Activated CD4-positive, alpha-beta T cell treated with anti-CD3 and anti-CD28 coated beads for 36 hours (primary cell): ENCODE measurements at regions of chr7 and their contacts with region 1.

Region 1: DNA sequence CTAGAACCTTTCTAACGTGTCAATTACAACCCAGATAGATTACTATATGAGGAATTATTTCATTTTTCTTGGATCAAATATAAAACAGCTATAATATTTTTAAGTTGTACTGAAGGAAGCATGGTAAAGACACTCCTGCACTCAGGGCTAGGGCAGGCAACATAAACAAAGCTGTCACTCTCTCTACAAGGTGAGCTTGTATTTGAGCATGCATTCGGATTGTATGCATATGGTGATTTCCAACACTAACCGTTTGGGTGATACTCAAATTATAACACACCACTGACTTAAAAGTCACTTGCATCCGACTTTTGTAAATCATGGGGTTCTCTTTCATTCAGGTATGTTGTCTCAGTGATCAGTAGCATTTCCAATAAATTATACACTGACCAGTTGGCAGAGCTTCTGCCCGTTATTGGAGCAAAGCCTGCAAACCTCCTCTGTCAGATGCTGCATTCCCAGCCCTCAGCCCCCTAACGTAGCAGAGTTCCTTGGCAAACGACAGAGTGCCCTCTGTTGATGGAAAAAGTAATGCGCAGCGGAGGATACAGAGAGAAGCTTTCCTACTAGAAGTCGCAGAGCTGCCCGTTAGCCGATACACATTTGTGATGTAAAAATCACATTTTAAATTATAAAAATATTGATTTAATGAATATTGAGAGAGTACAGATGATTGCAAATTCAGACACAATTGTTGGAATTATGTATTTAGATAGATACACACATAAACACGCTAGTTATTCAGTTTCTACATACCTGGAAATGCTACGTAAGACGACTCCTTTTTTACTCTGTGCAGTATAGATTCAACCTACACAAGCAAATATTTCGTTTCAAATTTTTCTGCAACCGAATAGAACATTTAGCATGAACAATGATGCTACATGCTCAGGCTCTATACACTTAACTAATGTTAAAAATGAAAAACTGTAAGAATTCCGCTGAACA is 173.9 kb upstream of the SP4 start:
- DNase-seq: peak; percentile 65
- ATAC-seq: peak; percentile 81
- H3K4me3 Mint-ChIP-seq: no peak overlapping the region
- H3K27ac Mint-ChIP-seq: no peak overlapping the region
- H3K4me1 Mint-ChIP-seq: no peaks in the 10 kb centered on the region
- H3K27me3 Mint-ChIP-seq: peaks cover 46% of the 10 kb centered on the region

Region 2: GRCh38 chr7:20778063-20778721 is 475.8 kb before region 1 on chr7:
- CTCF ChIA-PET with region 1: interaction called, 3 read pairs
- POLR2A ChIA-PET with region 1: no interaction called
- intact Hi-C with region 1: loop called (anchors 1 kb)
- DNase-seq: peak; percentile 61
- ATAC-seq: peak; percentile 68
- H3K4me3 Mint-ChIP-seq: no peak overlapping the region
- H3K27ac Mint-ChIP-seq: no peak overlapping the region
- H3K4me1 Mint-ChIP-seq: peaks cover 19% of the 10 kb centered on the region
- H3K27me3 Mint-ChIP-seq: peaks cover 68% of the 10 kb centered on the region

Region 3: DNA sequence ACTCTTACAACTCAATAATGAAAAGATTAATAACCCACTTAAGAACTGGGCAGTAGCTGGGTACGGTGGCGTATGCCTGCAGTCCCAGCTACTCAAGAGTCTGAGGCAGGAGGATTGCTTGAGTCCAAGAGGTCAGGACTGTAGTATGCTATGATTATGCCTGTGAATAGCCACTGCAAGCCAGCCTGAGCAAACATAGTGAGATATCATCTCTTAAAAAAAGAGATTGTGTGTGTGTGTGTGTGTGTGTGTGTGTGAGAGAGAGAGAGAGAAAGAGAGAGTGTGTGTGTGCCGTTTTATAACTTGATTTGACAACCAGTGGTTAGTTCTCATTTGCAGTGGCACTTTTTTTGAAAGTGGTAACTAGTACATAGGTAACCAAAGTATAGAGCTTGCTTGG is 146.6 kb after region 1 on chr7:
- CTCF ChIA-PET with region 1: no interaction called
- POLR2A ChIA-PET with region 1: no interaction called
- intact Hi-C with region 1: no loop called
- DNase-seq: no peak
- ATAC-seq: no peak
- H3K4me3 Mint-ChIP-seq: no peak overlapping the region
- H3K27ac Mint-ChIP-seq: no peak overlapping the region
- H3K4me1 Mint-ChIP-seq: no peaks in the 10 kb centered on the region
- H3K27me3 Mint-ChIP-seq: no peaks in the 10 kb centered on the region

Region 4: DNA sequence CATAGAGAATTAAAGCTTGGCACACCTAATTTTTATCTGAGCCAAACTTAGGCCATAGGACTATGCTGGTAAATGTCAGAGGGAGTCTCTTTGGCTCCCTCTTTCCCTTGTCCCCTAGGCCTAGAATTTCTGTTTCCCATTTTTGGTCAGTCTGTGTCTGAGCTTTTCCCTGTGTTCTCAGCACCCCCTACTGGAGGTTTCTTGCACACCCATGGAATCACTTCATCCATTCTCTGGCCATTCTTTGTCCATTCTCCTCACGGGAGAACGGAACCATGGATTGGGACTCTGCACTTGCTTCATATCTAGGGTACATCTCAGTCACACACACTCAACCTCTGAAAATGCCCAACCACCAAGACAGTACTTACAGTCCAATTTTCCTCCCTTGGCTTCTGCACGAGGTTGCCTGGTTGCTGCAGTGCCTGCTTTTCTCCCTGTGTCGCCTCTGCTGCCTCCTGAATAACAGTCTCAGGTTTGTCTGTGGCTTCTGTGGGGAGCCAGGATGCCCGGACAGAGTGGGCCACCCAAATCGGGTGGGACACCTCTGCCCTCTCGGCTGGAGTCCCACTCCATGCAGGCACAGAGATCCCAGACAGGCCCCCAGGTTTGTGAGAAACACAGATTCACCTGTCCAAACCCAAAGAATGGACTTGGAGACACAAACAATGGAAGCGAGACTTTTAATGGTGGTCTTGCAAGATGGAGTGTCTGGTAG is 253.8 kb after region 1 on chr7:
- CTCF ChIA-PET with region 1: interaction called, 6 read pairs
- POLR2A ChIA-PET with region 1: no interaction called
- intact Hi-C with region 1: loop called (anchors 1 kb)
- DNase-seq: peak; percentile 48
- ATAC-seq: peak; percentile 47
- H3K4me3 Mint-ChIP-seq: no peak overlapping the region
- H3K27ac Mint-ChIP-seq: no peak overlapping the region
- H3K4me1 Mint-ChIP-seq: no peaks in the 10 kb centered on the region
- H3K27me3 Mint-ChIP-seq: no peaks in the 10 kb centered on the region

Region 5: DNA sequence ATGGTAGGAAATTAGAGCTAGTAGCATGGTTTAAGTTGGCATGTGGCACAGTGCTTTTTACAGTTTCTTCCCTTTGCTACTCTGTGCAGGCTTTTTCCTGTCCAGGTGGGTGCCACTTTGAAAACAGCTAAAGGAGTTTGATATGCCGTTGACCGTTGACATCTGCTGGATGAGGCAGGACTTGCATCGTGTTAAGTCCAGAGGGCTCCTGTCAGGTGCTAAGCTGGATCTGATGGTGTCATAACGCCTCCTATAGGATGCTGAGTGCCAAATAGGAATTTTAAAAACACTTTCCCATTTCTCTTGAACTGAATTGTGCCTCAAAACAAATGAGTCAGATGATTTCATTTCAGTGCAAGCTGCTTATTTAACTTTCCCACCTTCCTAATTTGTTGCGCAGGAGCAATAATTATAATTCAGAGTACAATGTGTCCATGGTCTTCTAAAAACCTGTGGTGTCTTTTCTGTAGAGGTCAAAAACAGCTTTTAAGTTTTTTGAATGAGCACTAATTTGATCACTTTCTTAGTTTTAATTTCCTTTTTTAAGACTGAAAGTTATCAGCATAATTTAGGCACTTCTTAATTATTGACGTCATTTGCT is 513.4 kb after region 1 on chr7:
- CTCF ChIA-PET with region 1: interaction called, 3 read pairs
- POLR2A ChIA-PET with region 1: no interaction called
- intact Hi-C with region 1: loop called (anchors 1 to 2 kb)
- DNase-seq: peak; percentile 49
- ATAC-seq: peak; percentile 84
- H3K4me3 Mint-ChIP-seq: no peak overlapping the region
- H3K27ac Mint-ChIP-seq: no peak overlapping the region
- H3K4me1 Mint-ChIP-seq: peaks cover 14% of the 10 kb centered on the region
- H3K27me3 Mint-ChIP-seq: no peaks in the 10 kb centered on the region

Region 6: GRCh38 chr7:22082886-22083703 is 829.1 kb after region 1 on chr7:
- CTCF ChIA-PET with region 1: interaction called, 4 read pairs
- POLR2A ChIA-PET with region 1: no interaction called
- intact Hi-C with region 1: loop called (anchors 1 to 2 kb)
- DNase-seq: peak; percentile 91
- ATAC-seq: peak; percentile 99
- H3K4me3 Mint-ChIP-seq: peak overlapping the region; percentile 71
- H3K27ac Mint-ChIP-seq: no peak overlapping the region
- H3K4me1 Mint-ChIP-seq: peaks cover 10% of the 10 kb centered on the region
- H3K27me3 Mint-ChIP-seq: peaks cover 11% of the 10 kb centered on the region